Breast epithelium (tissue), 4 donors: ENCODE measurements at regions of chr12 and their contacts with region 1.

Region 1: GRCh38 chr12:45762185-45763110 is 32.9 kb downstream of the ARID2 start:
- DNase-seq: no peak
- H3K4me3 ChIP-seq: no peak overlapping the region
- H3K27ac ChIP-seq: no peak overlapping the region
- H3K4me1 ChIP-seq: no peaks in the 10 kb centered on the region
- H3K27me3 ChIP-seq: no peaks in the 10 kb centered on the region
- CTCF ChIP-seq: peak in 1 of 3 donors; percentile 36
- POLR2A ChIP-seq: no peak

Region 2: DNA sequence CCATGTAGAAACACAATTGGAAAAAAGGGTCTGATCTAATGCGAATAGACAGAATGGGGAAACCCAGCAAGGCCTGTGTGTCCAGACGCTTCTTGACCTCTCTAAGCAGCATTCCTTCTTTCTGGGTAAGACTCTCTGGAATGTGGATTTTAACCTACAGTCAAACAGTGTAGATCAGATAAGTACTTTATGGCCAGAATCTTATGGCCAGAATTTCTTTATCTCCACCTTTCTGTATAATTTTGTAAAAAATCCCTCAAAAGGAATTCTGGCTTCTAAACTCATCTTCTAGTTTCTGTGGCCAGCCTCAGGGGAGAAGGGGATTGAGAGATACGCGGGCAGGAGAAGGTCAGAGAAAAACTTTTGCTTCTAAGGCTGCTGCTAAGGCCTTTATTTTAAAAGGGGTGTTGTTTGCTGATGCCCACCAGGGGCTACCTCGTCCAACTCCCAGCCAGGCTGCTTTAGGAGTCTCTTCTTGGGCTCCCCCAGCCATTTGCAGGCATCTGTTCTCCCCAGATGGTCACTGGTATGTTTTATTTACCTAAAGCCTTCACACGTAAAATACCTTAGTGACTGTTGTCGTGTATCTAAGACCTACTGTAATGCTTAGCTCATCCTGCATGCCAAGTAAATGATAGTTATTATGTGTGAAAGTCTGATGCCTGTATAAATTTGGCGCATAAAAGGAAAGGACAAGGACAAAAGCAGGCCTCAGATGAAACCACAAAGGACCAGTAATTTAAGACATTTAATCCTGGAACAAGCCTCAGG is 478.1 kb before region 1 on chr12:
- intact Hi-C with region 1: no loop called
- DNase-seq: no peak
- H3K4me3 ChIP-seq: no peak overlapping the region
- H3K27ac ChIP-seq: peak overlapping the region; percentile 4 to 34
- H3K4me1 ChIP-seq: no peaks in the 10 kb centered on the region
- H3K27me3 ChIP-seq: no peaks in the 10 kb centered on the region
- CTCF ChIP-seq: no peak
- POLR2A ChIP-seq: no peak

Region 3: DNA sequence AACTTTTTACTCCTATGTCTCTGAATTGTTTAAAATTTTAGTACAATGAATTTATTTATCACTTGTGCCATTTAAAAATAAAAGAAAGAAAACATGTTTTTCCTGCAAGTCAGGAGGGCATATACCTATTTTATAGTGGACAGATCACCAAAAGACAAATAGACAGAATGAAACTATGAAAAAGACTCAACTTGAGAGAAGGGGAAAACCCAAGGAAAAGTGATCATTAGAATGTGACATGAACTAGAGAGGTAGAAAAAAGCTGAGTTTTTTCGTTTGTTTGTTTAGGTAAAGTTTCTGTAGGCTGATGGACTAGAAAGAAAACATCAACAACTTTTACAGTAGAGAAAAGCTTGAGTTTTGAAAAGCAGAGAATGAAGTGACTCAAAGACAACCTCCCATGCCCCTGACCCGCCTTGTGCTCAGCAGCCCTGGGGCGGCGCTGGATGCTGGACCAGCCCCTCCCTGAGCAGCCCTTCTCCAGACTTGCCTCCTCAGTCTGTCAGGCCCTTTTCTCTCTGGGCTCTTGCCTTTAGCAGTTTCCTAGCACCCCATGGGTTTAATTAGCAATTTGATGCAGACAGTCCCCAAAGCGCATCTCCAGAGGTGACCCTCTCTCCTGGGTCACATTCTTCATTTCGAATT is 128.1 kb before region 1 on chr12:
- intact Hi-C with region 1: no loop called
- DNase-seq: no peak
- H3K4me3 ChIP-seq: no peak overlapping the region
- H3K27ac ChIP-seq: no peak overlapping the region
- H3K4me1 ChIP-seq: no peaks in the 10 kb centered on the region
- H3K27me3 ChIP-seq: no peaks in the 10 kb centered on the region
- CTCF ChIP-seq: no peak
- POLR2A ChIP-seq: no peak

Region 4: GRCh38 chr12:46209914-46210872 is 447.7 kb after region 1 on chr12:
- intact Hi-C with region 1: loop called (anchors 5 kb)
- DNase-seq: peak; percentile 87 to 89
- H3K4me3 ChIP-seq: no peak overlapping the region
- H3K27ac ChIP-seq: peak overlapping the region; percentile 78 to 83
- H3K4me1 ChIP-seq: no peaks in the 10 kb centered on the region
- H3K27me3 ChIP-seq: no peaks in the 10 kb centered on the region
- CTCF ChIP-seq: no peak
- POLR2A ChIP-seq: no peak